Activated CD4-positive, alpha-beta memory T cell treated with anti-CD3 and anti-CD28 coated beads, Interleukin-2, amount 10 ng/mL, durations not matched to agents 7 days and 5 days (primary cell): ENCODE measurements at regions of chrX and their contacts with region 1.

Region 1: GRCh38 chrX:130339408-130340222 is at the start of gene SLC25A14:
- DNase-seq: peak; percentile 80
- H3K4me3 Mint-ChIP-seq: peak within 1 kb of the TSS; percentile 87
- H3K27ac Mint-ChIP-seq: peak within 1 kb of the TSS; percentile 86
- H3K4me1 Mint-ChIP-seq: peaks cover 23% of the 10 kb centered on the region
- H3K27me3 Mint-ChIP-seq: no peaks in the 10 kb centered on the region
- total RNA-seq, gene SLC25A14: 9.4 to 10.6 TPM

Region 2: GRCh38 chrX:130268500-130269170 is 71.0 kb before region 1 on chrX and contains the start of gene ZNF280C:
- CTCF ChIA-PET with region 1: no interaction called
- POLR2A ChIA-PET with region 1: interaction called, 11 read pairs
- DNase-seq: peak; percentile 93
- H3K4me3 Mint-ChIP-seq: peak within 1 kb of the TSS; percentile 85
- H3K27ac Mint-ChIP-seq: peak within 1 kb of the TSS; percentile 85
- H3K4me1 Mint-ChIP-seq: peaks cover 27% of the 10 kb centered on the region
- H3K27me3 Mint-ChIP-seq: peaks cover 4% of the 10 kb centered on the region
- total RNA-seq, gene ZNF280C: 5.1 to 6.7 TPM

Region 3: GRCh38 chrX:130482871-130483270 is 143.3 kb after region 1 on chrX:
- CTCF ChIA-PET with region 1: no interaction called
- POLR2A ChIA-PET with region 1: no interaction called
- DNase-seq: no peak
- H3K4me3 Mint-ChIP-seq: no peak overlapping the region
- H3K27ac Mint-ChIP-seq: no peak overlapping the region
- H3K4me1 Mint-ChIP-seq: no peaks in the 10 kb centered on the region
- H3K27me3 Mint-ChIP-seq: peaks cover 2% of the 10 kb centered on the region